Activated B cell treated with CpG ODN at 0.5 μM for 24 hours (primary cell): ENCODE measurements at regions of chr20 and their contacts with region 1.

Region 1: DNA sequence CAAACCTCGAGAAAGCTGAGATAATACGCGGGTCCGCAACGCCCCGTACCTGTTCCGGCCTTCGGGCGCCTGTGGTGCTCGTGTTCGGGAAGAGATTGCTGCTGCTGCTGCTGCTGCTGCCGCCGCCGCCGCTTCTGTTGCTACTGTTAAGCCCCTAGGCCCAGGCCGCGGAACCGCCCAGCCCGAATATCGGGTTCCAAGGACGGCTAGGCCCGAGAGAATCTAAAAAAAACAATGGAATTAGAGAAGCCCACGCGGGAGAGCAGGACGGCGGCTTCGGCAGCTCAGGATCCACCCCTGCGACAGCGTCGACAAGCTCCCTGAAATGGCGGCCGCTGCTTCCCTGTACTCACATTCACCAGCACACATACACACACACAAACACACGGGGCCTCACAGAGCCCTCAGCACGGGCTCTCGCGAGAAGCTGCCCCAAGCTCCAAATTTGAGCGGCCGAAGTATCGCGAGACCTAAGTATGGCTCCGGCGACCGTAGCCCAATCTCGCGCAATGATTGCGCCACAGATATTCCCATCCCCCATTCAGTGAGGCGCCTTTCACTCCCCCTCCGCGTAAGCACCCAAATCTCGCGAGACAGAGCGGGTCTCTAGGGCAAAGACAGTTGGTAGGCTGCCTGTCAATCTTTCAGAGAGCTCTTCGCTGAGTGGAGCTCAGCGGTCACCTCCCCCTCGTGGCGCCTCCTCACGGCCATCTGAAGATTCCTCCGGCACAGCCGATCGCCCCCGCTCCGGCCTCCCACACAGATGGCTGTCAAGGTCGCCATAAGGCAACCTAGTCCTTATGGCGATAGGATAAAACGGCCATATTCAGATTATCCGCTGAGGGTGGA is at the start of gene RBM39:
- DNase-seq: peak; percentile 94
- ATAC-seq: peak; percentile 81
- H3K4me3 Mint-ChIP-seq: peak within 1 kb of the TSS; percentile 99
- H3K27ac Mint-ChIP-seq: peak within 1 kb of the TSS; percentile 99
- H3K4me1 Mint-ChIP-seq: peaks cover 46% of the 10 kb centered on the region
- H3K27me3 Mint-ChIP-seq: no peaks in the 10 kb centered on the region
- CTCF ChIP-seq: no peak
- total RNA-seq, gene RBM39: 432 and 483 TPM in 2 replicates

Region 2: GRCh38 chr20:34955232-34956040 is 786.7 kb before region 1 on chr20 and contains the starts of genes GSS and MYH7B:
- CTCF ChIA-PET with region 1: no interaction called
- POLR2A ChIA-PET with region 1: interaction called, 3 read pairs
- intact Hi-C with region 1: loop called (anchors 5 kb)
- DNase-seq: peak; percentile 98
- ATAC-seq: peak; percentile 95
- H3K4me3 Mint-ChIP-seq: peak within 1 kb of the TSS; percentile 97
- H3K27ac Mint-ChIP-seq: peak within 1 kb of the TSS; percentile 83
- H3K4me1 Mint-ChIP-seq: peaks cover 26% of the 10 kb centered on the region
- H3K27me3 Mint-ChIP-seq: no peaks in the 10 kb centered on the region
- CTCF ChIP-seq: no peak
- total RNA-seq, gene GSS: 26.1 and 27.5 TPM in 2 replicates
- total RNA-seq, gene MYH7B: 0.20 and 0.35 TPM in 2 replicates

Region 3: DNA sequence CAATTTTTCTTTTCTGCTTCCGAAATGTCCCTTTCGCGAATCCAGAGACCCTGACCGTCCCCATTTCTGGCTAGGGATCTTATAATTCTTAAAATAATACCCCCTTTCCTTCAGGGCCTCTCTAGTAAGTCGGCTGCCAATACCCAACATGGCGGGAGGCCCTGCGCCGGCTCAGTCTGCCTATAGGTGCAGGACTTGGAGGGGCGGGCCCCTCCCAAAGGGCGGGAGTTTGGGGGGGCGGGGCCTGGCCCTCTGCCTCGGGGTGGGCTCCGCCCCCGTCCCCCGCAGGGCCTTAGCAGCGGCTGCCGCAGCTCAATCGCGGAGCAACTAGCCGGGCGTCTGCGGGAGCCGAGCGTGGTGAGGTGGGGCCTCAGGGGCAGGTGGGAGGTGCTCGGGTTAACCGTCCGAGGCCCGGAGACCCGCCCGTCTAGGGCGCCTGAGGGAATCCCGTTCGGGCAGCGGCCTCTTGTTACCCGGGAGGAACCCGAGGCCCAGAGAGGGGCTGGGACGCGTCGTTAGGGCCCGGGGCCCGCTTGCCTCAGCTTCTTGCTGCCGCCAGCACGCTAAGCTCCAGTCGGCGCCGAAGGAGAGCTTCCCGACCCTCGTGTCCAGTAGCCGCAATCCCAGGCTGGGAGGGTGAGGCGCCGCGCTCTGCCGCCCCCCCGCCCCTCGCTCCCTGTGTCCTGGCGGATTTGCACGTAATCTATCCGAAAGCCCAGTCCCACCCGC is 287.1 kb before region 1 on chr20 and contains the start of gene CEP250:
- CTCF ChIA-PET with region 1: no interaction called
- POLR2A ChIA-PET with region 1: interaction called, 24 read pairs
- intact Hi-C with region 1: no loop called
- DNase-seq: peak; percentile 90
- ATAC-seq: peak; percentile 99
- H3K4me3 Mint-ChIP-seq: peak within 1 kb of the TSS; percentile 93
- H3K27ac Mint-ChIP-seq: peak within 1 kb of the TSS; percentile 99
- H3K4me1 Mint-ChIP-seq: peaks cover 12% of the 10 kb centered on the region
- H3K27me3 Mint-ChIP-seq: no peaks in the 10 kb centered on the region
- CTCF ChIP-seq: no peak
- total RNA-seq, gene CEP250: 49.6 and 54.7 TPM in 2 replicates

Region 4: DNA sequence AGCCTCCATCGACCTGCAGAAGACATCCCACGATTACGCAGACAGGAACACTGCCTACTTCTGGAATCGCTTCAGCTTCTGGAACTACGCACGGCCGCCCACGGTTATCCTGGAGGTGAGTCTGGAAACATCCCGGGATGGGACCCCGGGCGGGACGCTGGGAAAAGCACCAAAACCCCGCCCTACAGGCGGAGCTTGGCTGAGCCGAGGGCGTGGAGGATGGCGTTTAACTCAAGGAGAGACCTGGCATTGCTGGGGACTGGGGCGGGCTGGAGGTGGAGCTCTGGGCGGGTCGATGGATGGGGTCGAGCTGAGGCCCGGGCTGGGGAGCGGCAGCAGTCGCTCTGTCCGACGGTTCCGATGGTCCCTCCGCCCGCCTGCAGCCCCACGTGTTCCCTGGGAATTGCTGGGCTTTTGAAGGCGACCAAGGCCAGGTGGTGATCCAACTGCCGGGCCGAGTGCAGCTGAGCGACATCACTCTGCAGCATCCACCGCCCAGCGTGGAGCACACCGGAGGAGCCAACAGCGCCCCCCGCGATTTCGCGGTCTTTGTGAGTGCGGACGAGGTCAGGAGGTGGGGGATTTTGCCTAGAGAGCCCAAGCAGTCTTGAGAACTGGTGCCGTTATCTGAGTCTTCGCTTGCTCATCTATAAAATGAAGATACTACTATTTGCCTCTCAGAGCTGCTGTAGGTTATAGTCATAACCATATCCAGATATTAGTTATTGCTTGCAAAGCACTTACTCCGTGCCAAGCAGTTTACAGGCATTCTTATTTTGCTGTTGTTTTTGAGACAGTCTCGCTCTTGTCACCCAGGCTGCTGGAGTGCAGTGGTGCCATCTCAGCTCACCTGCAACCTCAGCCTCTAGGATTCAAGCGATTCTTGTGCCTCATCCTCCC is 122.7 kb before region 1 on chr20:
- CTCF ChIA-PET with region 1: no interaction called
- POLR2A ChIA-PET with region 1: interaction called, 67 read pairs
- intact Hi-C with region 1: loop called (anchors 1 kb)
- DNase-seq: peak; percentile 74
- ATAC-seq: peak; percentile 23
- H3K4me3 Mint-ChIP-seq: peak overlapping the region; percentile 87
- H3K27ac Mint-ChIP-seq: peak overlapping the region; percentile 66
- H3K4me1 Mint-ChIP-seq: peaks cover 40% of the 10 kb centered on the region
- H3K27me3 Mint-ChIP-seq: peaks cover 2% of the 10 kb centered on the region
- CTCF ChIP-seq: no peak

Region 5: GRCh38 chr20:35711588-35712209 is 30.4 kb before region 1 on chr20:
- CTCF ChIA-PET with region 1: no interaction called
- POLR2A ChIA-PET with region 1: interaction called, 22 read pairs
- intact Hi-C with region 1: no loop called
- DNase-seq: no peak
- ATAC-seq: no peak
- H3K4me3 Mint-ChIP-seq: no peak overlapping the region
- H3K27ac Mint-ChIP-seq: no peak overlapping the region
- H3K4me1 Mint-ChIP-seq: peaks cover 33% of the 10 kb centered on the region
- H3K27me3 Mint-ChIP-seq: no peaks in the 10 kb centered on the region
- CTCF ChIP-seq: no peak

Region 6: DNA sequence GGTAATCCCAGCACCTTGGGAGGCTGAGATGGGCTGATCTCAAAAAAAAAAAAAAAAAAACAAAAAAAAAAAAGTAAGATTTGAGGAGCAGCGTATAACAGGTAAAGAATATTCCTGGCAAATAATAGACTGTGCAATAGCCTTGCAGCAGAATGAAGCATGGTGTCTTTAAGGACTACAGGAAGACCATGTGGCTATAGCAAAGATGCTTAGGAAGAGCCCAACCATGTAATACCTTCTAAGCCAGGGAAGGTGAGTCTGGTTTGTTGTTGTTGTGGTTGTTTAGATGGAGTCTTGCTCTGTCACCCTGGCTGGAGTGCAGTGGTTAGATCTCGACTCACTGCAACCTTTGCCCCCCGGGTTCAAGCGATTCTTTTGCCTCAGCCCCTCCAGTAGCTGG is 14.3 kb after region 1 on chr20:
- CTCF ChIA-PET with region 1: no interaction called
- POLR2A ChIA-PET with region 1: interaction called, 12 read pairs
- intact Hi-C with region 1: no loop called
- DNase-seq: no peak
- ATAC-seq: no peak
- H3K4me3 Mint-ChIP-seq: no peak overlapping the region
- H3K27ac Mint-ChIP-seq: no peak overlapping the region
- H3K4me1 Mint-ChIP-seq: no peaks in the 10 kb centered on the region
- H3K27me3 Mint-ChIP-seq: no peaks in the 10 kb centered on the region
- CTCF ChIP-seq: no peak

Region 7: DNA sequence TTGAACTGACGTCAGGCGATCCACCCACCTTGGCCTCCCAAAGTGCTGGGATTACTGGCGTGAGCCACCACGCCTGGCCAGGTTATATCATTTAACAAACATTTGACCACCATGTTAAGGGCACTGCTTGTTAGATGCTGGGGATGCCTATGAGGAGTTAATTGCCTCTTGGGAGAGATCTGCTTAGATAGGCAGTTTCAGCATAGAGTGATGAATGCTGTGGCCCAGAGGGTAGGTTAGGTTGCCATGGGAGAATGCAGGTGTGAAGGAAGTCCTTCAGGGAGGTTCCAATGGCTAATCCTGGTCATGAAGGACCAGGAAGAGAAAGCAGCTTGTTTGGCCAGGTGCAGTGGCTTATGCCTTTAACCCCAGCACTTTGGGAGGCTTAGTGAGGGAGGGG is 46.7 kb after region 1 on chr20:
- CTCF ChIA-PET with region 1: no interaction called
- POLR2A ChIA-PET with region 1: no interaction called
- intact Hi-C with region 1: no loop called
- DNase-seq: no peak
- ATAC-seq: no peak
- H3K4me3 Mint-ChIP-seq: no peak overlapping the region
- H3K27ac Mint-ChIP-seq: no peak overlapping the region
- H3K4me1 Mint-ChIP-seq: peaks cover 8% of the 10 kb centered on the region
- H3K27me3 Mint-ChIP-seq: no peaks in the 10 kb centered on the region
- CTCF ChIP-seq: no peak

Region 8: GRCh38 chr20:35883778-35884540 is 141.8 kb after region 1 on chr20:
- CTCF ChIA-PET with region 1: interaction called, 12 read pairs
- POLR2A ChIA-PET with region 1: interaction called, 13 read pairs
- intact Hi-C with region 1: loop called (anchors 1 kb)
- DNase-seq: peak; percentile 28
- ATAC-seq: peak; percentile 85
- H3K4me3 Mint-ChIP-seq: no peak overlapping the region
- H3K27ac Mint-ChIP-seq: no peak overlapping the region
- H3K4me1 Mint-ChIP-seq: peaks cover 2% of the 10 kb centered on the region
- H3K27me3 Mint-ChIP-seq: no peaks in the 10 kb centered on the region
- CTCF ChIP-seq: no peak